ENCODE measurements at regions of chr17 and their contacts with region 1.

Region 1: DNA sequence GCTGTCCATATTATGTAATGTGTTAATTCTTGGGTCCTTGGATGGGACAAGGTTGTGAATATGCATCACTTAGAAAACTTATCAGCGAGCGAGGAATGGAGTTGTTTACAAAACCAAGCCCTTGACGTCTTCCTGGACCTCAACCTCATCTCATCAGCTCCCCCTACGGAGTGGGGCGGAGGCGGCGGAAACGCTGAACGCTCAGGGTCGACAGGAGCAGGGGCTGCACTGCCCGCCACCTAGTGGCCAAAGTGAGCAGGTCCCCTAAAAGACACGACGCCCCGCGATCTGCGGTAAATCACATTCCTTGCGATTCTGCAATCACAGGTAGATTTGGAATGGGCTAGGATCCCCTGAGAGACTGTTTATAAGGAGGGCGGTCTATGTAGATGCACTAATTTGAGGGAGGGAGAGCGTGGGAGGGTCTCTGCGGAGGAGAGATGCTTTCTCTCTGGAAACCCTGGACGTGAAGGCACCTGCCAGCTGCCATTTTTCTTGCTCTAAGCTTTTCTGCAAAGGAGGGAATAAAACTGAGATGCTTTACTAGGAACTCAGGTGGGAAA is 5.4 kb upstream of the ICAM2 start:
- DNase-seq: peak; percentile 94
- ATAC-seq: peak; percentile 90
- H3K4me3 ChIP-seq: peak overlapping the region in 4 of 5 experiments; percentile 4 to 47 (median 22)
- H3K4me3 Mint-ChIP-seq: peak overlapping the region; percentile 80
- H3K27ac ChIP-seq: peak overlapping the region; percentile 52 to 67
- H3K27ac Mint-ChIP-seq: peak overlapping the region; percentile 57
- H3K4me1 ChIP-seq: peaks cover 26 to 30% of the 10 kb centered on the region in 2 donors
- H3K4me1 Mint-ChIP-seq: peaks cover 37% of the 10 kb centered on the region
- H3K27me3 ChIP-seq: no peaks in the 10 kb centered on the region
- H3K27me3 Mint-ChIP-seq: no peaks in the 10 kb centered on the region
- CTCF ChIP-seq: peak; percentile 94

Region 2: GRCh38 chr17:63919311-63919723 is 106.5 kb before region 1 on chr17:
- CTCF ChIA-PET with region 1: interaction called, 212 read pairs
- POLR2A ChIA-PET with region 1: interaction called, 29 read pairs
- intact Hi-C with region 1: loop called (anchors 1 kb)
- DNase-seq: peak; percentile 93
- ATAC-seq: peak; percentile 58
- H3K4me3 ChIP-seq: peak overlapping the region in 3 of 5 experiments; percentile 8 to 26 (median 19)
- H3K4me3 Mint-ChIP-seq: peak overlapping the region; percentile 87
- H3K27ac ChIP-seq: peak overlapping the region in 1 of 2 donors; percentile 18
- H3K27ac Mint-ChIP-seq: peak overlapping the region; percentile 86
- H3K4me1 ChIP-seq: peaks cover 68 to 83% of the 10 kb centered on the region in 2 donors
- H3K4me1 Mint-ChIP-seq: peaks cover 72% of the 10 kb centered on the region
- H3K27me3 ChIP-seq: no peaks in the 10 kb centered on the region
- H3K27me3 Mint-ChIP-seq: no peaks in the 10 kb centered on the region
- CTCF ChIP-seq: peak; percentile 88

Region 3: GRCh38 chr17:63961355-63962212 is 64.2 kb before region 1 on chr17:
- CTCF ChIA-PET with region 1: interaction called, 214 read pairs
- POLR2A ChIA-PET with region 1: no interaction called
- intact Hi-C with region 1: no loop called
- DNase-seq: peak; percentile 74
- ATAC-seq: peak; percentile 85
- H3K4me3 ChIP-seq: peak overlapping the region in 1 of 5 experiments; percentile 1
- H3K4me3 Mint-ChIP-seq: peak overlapping the region; percentile 70
- H3K27ac ChIP-seq: no peak overlapping the region
- H3K27ac Mint-ChIP-seq: no peak overlapping the region
- H3K4me1 ChIP-seq: peaks cover 9 to 18% of the 10 kb centered on the region in 2 donors
- H3K4me1 Mint-ChIP-seq: peaks cover 16% of the 10 kb centered on the region
- H3K27me3 ChIP-seq: no peaks in the 10 kb centered on the region
- H3K27me3 Mint-ChIP-seq: no peaks in the 10 kb centered on the region
- CTCF ChIP-seq: no peak

Region 4: GRCh38 chr17:64005734-64006167 is 20.1 kb before region 1 on chr17:
- CTCF ChIA-PET with region 1: interaction called, 12 read pairs
- POLR2A ChIA-PET with region 1: no interaction called
- intact Hi-C with region 1: no loop called
- DNase-seq: no peak
- ATAC-seq: no peak
- H3K4me3 ChIP-seq: no peak overlapping the region
- H3K4me3 Mint-ChIP-seq: no peak overlapping the region
- H3K27ac ChIP-seq: no peak overlapping the region
- H3K27ac Mint-ChIP-seq: no peak overlapping the region
- H3K4me1 ChIP-seq: peaks cover 27 to 41% of the 10 kb centered on the region in 2 donors
- H3K4me1 Mint-ChIP-seq: peaks cover 30% of the 10 kb centered on the region
- H3K27me3 ChIP-seq: no peaks in the 10 kb centered on the region
- H3K27me3 Mint-ChIP-seq: no peaks in the 10 kb centered on the region
- CTCF ChIP-seq: no peak

Region 5: DNA sequence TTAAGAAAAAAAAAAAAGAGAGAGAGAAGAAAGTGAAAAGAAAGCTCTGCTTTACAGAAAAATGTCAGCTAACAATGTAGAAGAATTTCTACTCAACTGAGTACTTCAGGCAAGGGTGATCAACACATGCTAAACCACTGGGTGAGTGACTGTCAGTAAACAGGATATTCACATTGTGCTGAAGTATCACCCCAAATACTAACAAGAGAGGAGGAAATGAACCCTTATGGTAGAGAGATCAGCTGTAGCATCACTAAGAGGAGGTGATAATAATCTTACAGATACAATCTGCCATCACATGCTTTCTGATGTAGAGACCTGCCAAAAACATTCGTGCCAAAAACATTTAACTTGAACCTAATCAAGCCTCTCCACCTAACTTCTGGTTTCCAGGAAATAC is 25.3 kb after region 1 on chr17:
- CTCF ChIA-PET with region 1: interaction called, 20 read pairs
- POLR2A ChIA-PET with region 1: no interaction called
- intact Hi-C with region 1: no loop called
- DNase-seq: no peak
- ATAC-seq: no peak
- H3K4me3 ChIP-seq: no peak overlapping the region
- H3K4me3 Mint-ChIP-seq: no peak overlapping the region
- H3K27ac ChIP-seq: no peak overlapping the region
- H3K27ac Mint-ChIP-seq: no peak overlapping the region
- H3K4me1 ChIP-seq: peaks cover 5 to 13% of the 10 kb centered on the region in 2 donors
- H3K4me1 Mint-ChIP-seq: peaks cover 10% of the 10 kb centered on the region
- H3K27me3 ChIP-seq: no peaks in the 10 kb centered on the region
- H3K27me3 Mint-ChIP-seq: no peaks in the 10 kb centered on the region
- CTCF ChIP-seq: no peak

Region 6: DNA sequence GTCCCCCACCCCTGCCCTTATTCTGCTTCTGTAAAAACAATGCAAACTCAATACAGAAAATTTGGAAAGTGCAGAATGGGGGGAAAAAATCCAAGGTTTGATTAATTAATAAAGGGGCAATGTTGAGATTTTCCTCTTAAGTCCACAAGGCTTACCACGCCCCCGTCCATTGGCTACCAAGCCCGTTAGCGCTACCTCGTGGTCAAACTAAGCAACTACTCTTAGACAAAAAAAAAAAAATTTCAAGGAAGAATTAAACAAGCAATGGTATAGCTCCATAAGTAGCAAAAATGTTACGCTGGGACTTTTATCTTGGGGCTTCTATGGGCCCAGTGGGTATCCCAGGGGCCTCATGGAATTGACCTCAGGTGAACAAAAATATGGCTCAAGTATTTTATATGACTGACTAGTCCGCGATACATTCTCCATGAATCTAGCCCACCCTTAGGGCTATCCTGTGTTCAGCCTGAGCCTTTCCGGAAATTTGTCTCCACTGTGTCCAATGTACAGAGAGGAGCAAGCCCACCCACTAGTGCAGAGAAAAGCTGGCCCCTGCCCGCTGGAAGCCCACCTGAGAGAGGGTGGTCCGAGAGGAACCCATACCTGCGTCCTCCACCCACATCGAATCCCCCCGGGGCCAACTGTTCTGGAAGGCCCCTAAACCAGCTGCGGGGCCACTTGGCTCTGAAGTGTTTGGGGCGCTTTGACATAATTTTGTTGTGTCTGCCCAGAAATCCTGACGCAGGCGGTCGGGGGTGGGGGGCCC is 256.3 kb after region 1 on chr17:
- CTCF ChIA-PET with region 1: interaction called, 22 read pairs
- POLR2A ChIA-PET with region 1: no interaction called
- intact Hi-C with region 1: loop called (anchors 1 kb)
- DNase-seq: peak; percentile 74
- ATAC-seq: peak; percentile 45
- H3K4me3 ChIP-seq: no peak overlapping the region
- H3K4me3 Mint-ChIP-seq: no peak overlapping the region
- H3K27ac ChIP-seq: no peak overlapping the region
- H3K27ac Mint-ChIP-seq: no peak overlapping the region
- H3K4me1 ChIP-seq: no peaks in the 10 kb centered on the region
- H3K4me1 Mint-ChIP-seq: no peaks in the 10 kb centered on the region
- H3K27me3 ChIP-seq: no peaks in the 10 kb centered on the region
- H3K27me3 Mint-ChIP-seq: peaks cover 3% of the 10 kb centered on the region
- CTCF ChIP-seq: peak; percentile 80

Measured in B cell (primary cell).